ENCODE measurements at regions of chr17 and their contacts with region 1.

Region 1: GRCh38 chr17:47840740-47841603 is at the start of gene SCRN2:
- DNase-seq: peak; percentile 85 to 99
- H3K4me3 ChIP-seq: peak within 1 kb of the TSS; percentile 47 to 92 (median 80)
- H3K27ac ChIP-seq: no peak within 1 kb of the TSS
- H3K4me1 ChIP-seq: peaks cover 0 to 23% (median 8%) of the 10 kb centered on the region in 4 experiments; a peak in 5 of 7 replicates
- H3K27me3 ChIP-seq: peaks cover 2 to 18% (median 12%) of the 10 kb centered on the region in 4 experiments
- CTCF ChIP-seq: peak; percentile 90 to 96 (median 90)
- EP300 ChIP-seq: no peak
- POLR2A ChIP-seq: no peak
- RAD21 ChIP-seq: peak; percentile 95 to 97
- total RNA-seq, gene SCRN2: 24.4 and 27.4 TPM in 2 replicates

Region 2: DNA sequence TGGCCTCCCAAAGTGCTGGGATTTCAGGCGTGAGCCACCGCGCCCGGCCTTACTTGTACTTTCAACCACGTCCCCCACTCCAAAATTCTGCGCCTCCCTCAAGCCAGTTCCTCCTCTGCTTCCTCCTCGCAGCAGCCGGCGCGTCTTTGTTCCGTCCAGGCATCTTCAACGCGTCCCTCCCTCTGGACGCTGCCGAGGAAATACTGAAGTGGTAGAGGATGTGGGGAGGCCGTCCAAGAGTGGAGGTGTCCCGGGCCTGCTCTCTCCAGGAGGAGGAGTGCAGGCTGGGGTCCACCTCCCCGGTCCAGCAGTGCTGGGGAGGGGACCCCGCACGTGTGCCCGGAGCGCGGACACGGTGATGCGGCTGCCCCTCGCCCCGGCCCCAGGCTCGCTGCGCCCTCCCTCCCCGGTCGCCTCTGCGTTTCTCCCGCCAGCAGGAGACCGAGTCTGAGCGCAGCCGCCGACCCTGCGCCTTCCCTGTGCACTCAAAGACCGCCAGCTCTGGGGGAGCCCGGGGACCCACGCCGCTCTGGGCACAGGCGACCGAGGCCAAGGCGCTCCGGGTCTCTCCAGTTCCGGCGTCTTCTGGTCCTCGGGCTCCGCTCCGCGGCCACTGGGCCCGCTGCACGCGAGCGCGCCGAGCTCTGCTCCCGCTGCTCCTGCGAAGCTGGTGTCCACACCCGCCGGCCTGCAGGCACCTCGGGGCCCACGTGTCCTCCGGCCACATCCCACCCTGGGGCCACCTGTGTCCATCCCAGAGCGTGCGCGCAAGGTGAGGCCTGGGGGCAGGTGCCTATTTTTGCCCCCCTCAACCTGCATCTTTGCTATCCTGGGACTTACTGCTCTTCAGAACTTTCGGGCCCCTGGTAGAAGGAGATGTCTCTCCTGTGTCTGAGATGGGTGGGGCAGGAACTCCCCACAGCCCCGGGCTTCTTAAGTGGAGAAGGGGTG is 51.1 kb before region 1 on chr17:
- CTCF ChIA-PET with region 1: no interaction called
- POLR2A ChIA-PET with region 1: no interaction called
- DNase-seq: peak; percentile 31 to 83
- H3K4me3 ChIP-seq: peak overlapping the region; percentile 49 to 69 (median 62)
- H3K27ac ChIP-seq: no peak overlapping the region
- H3K4me1 ChIP-seq: peaks cover 0 to 3% (median 2%) of the 10 kb centered on the region in 4 experiments; a peak in 3 of 7 replicates
- H3K27me3 ChIP-seq: peaks cover 6 to 33% (median 26%) of the 10 kb centered on the region in 4 experiments
- CTCF ChIP-seq: peak; percentile 52 to 59 (median 54)
- EP300 ChIP-seq: no peak
- POLR2A ChIP-seq: no peak
- RAD21 ChIP-seq: peak; percentile 59 to 75

Region 3: GRCh38 chr17:47821424-47822391 is 19.3 kb before region 1 on chr17 and contains the start of gene OSBPL7:
- CTCF ChIA-PET with region 1: interaction called, 10 read pairs
- POLR2A ChIA-PET with region 1: interaction called, 5 read pairs
- DNase-seq: peak; percentile 60 to 79
- H3K4me3 ChIP-seq: peak within 1 kb of the TSS; percentile 42 to 70 (median 70)
- H3K27ac ChIP-seq: no peak within 1 kb of the TSS
- H3K4me1 ChIP-seq: peaks cover 0 to 12% (median 7%) of the 10 kb centered on the region in 4 experiments; a peak in 6 of 7 replicates
- H3K27me3 ChIP-seq: no peaks in the 10 kb centered on the region
- CTCF ChIP-seq: peak; percentile 36 to 59 (median 51)
- EP300 ChIP-seq: peak in 1 of 2 experiments; percentile 23; a peak in 1 of 3 replicates
- POLR2A ChIP-seq: no peak
- RAD21 ChIP-seq: peak in 1 of 2 experiments; percentile 15; a peak in 1 of 4 replicates
- total RNA-seq, gene OSBPL7: 8.9 and 9.6 TPM in 2 replicates

Region 4: DNA sequence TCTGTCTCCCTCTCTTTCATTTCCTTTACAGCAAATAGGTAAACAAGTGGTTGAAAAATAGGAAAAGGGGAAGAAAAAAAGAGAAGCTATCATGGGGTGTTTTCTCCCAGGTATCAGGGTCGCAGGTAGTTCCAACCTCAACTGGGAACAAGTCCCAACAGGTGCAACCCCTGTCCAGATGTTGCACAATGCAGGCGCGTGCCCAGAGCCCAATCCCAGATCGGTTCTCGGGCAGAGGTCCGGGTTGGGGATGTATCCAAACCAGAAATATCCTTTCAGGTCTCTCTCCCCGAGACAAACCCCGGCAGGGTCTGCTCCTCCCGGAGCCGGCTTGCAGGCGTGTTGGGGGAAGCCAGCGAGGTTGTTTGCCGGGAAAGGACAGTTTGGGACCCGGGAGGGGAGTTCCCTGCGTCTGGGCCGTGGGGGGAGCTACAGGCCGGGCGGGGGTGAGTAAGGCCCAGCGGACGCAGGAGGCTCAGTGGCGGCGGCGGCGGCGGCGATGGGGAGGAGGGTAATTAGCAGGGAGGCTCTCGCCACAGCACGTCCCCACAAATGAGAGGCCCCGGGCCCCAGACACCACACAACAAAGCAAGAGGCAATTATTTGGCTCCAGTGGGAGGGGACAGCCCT is 31.2 kb after region 1 on chr17:
- CTCF ChIA-PET with region 1: interaction called, 257 read pairs
- POLR2A ChIA-PET with region 1: interaction called, 10 read pairs
- DNase-seq: no peak
- H3K4me3 ChIP-seq: peak overlapping the region; percentile 34 to 57 (median 47)
- H3K27ac ChIP-seq: no peak overlapping the region
- H3K4me1 ChIP-seq: peaks cover 21 to 44% (median 27%) of the 10 kb centered on the region in 4 experiments
- H3K27me3 ChIP-seq: peaks cover 3 to 25% (median 17%) of the 10 kb centered on the region in 4 experiments; a peak in 5 of 7 replicates
- CTCF ChIP-seq: no peak
- EP300 ChIP-seq: no peak
- POLR2A ChIP-seq: no peak
- RAD21 ChIP-seq: no peak

Region 5: DNA sequence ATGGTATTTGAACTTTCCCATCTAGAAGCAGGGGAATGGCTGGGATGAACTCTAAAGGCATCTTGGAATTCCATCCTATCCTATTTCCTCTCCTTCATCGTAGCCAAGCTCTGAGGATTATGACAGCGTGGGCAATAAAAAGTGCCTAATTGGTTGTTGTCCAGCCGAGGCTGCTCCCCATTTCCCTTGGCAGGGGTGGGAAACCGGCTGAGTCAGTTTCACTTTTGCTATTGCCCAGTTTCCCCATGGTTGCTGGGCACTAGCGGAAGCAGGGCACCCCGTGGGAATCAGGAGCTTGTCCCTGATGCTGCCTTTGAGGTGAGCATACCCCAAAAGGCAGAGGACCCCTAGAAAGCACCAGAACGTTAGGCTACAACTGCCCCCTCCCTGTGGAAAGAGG is 41.3 kb after region 1 on chr17:
- CTCF ChIA-PET with region 1: interaction called, 1,206 read pairs
- POLR2A ChIA-PET with region 1: interaction called, 10 read pairs
- DNase-seq: no peak
- H3K4me3 ChIP-seq: no peak overlapping the region
- H3K27ac ChIP-seq: no peak overlapping the region
- H3K4me1 ChIP-seq: peaks cover 0 to 20% (median 12%) of the 10 kb centered on the region in 4 experiments; a peak in 6 of 7 replicates
- H3K27me3 ChIP-seq: no peaks in the 10 kb centered on the region; a peak in 1 of 7 replicates
- CTCF ChIP-seq: no peak
- EP300 ChIP-seq: no peak
- POLR2A ChIP-seq: no peak
- RAD21 ChIP-seq: no peak

Region 6: GRCh38 chr17:47895856-47896671 is 55.1 kb after region 1 on chr17 and contains the start of gene SP2:
- CTCF ChIA-PET with region 1: interaction called, 1,206 read pairs
- POLR2A ChIA-PET with region 1: interaction called, 134 read pairs
- DNase-seq: peak; percentile 100
- H3K4me3 ChIP-seq: peak within 1 kb of the TSS; percentile 85 to 99 (median 93)
- H3K27ac ChIP-seq: peak within 1 kb of the TSS; percentile 83
- H3K4me1 ChIP-seq: peaks cover 0 to 9% (median 4%) of the 10 kb centered on the region in 4 experiments; a peak in 6 of 7 replicates
- H3K27me3 ChIP-seq: no peaks in the 10 kb centered on the region; a peak in 1 of 7 replicates
- CTCF ChIP-seq: no peak; a peak in 1 of 4 replicates
- EP300 ChIP-seq: no peak
- POLR2A ChIP-seq: peak; percentile 53 to 75
- RAD21 ChIP-seq: no peak
- total RNA-seq, gene SP2: 11.0 and 13.8 TPM in 2 replicates

Region 7: DNA sequence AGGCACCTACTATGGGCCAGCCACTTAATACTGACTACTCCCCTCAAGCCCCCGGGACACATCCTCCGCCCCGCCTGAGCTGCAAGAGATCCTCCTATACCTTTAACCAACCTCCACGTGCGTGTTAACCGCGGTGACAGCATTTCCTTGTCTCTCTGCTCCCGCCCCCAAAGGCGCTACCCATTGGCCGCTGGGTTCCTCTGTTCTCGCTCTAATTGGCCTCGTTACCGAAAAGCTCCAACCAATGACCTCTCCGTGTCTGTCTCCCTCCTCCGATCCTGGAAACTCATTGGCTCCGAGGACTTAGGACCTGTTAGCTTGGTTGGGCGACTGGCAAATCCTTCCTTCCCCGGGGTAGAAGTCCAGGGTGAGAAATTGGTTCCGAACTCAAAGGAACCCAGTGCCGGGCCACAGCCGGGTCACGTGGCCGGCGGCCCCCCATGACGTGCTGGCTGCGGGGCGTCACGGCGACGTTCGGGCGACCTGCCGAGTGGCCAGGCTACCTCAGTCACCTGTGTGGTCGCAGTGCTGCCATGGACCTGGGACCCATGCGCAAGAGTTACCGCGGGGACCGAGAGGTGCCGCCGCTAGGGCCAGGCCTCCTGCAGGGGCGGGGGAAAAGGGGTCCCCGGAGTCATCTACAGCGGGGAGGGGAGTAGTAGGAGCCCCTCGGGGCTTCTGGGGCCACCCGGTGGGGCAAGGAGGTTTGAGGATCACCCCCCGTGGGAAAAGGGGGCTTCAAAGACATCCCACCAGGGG is 100.4 kb after region 1 on chr17 and contains the start of gene PNPO:
- CTCF ChIA-PET with region 1: interaction called, 246 read pairs
- POLR2A ChIA-PET with region 1: no interaction called
- DNase-seq: peak; percentile 56 to 77
- H3K4me3 ChIP-seq: peak within 1 kb of the TSS; percentile 17 to 58 (median 35); a peak in 7 of 8 replicates
- H3K27ac ChIP-seq: no peak within 1 kb of the TSS
- H3K4me1 ChIP-seq: peaks cover 0 to 1% (median 0%) of the 10 kb centered on the region in 4 experiments; a peak in 1 of 7 replicates
- H3K27me3 ChIP-seq: peaks cover 0 to 12% (median 7%) of the 10 kb centered on the region in 4 experiments; a peak in 5 of 7 replicates
- CTCF ChIP-seq: no peak
- EP300 ChIP-seq: no peak
- POLR2A ChIP-seq: no peak
- RAD21 ChIP-seq: no peak
- total RNA-seq, gene PNPO: 7.0 and 8.8 TPM in 2 replicates